ENCODE measurements at regions of chr11 and their contacts with region 1.

Region 1: DNA sequence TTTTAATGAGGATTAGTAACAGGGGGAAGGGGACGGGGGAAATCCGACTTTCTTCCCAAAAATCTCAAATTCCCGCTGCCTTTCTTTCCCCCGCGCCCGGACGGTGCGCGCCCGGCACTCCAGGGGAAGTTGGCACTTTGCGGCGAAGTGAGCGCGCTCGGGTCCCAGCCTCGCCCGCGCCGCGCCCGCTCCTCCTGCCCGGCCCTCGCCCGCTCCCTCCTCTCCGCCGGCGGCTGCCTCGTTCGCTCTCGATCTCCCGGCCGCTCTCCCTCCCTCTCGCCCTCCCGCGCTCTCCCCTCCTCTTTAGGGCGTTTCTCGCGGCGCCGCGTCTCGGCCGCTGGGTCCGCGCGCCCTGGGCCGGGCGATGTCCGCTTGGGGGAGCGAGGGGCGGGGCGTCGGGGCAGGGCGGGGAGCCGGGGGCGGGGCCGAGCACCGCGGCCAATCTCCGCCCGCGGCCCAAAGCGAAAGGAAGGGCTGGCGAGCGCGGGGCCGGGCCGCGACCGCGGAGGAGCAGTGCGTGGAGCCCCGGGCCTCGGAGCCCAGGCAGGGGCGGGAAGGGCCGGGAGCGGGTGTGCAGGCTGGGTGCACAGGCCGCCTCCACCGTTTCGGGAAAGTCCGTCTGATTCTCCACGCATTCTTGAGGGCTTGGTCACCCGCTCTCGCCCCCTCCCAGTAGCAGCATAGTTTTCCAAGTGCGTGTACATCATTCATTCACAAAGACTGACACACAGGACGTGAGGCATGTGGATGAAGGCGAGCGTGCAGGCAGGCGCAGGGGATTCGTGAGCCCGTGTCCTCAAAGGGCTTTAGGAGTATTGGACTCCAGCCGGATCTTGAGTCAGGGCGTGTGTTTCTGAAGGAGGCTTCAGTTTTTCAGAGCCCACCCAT is 65.1 kb downstream of the ETS1 start:
- DNase-seq: peak; percentile 94
- H3K4me3 Mint-ChIP-seq: peak overlapping the region; percentile 97
- H3K27ac Mint-ChIP-seq: peak overlapping the region; percentile 96
- H3K4me1 Mint-ChIP-seq: peaks cover 42% of the 10 kb centered on the region
- H3K27me3 Mint-ChIP-seq: no peaks in the 10 kb centered on the region

Region 2: DNA sequence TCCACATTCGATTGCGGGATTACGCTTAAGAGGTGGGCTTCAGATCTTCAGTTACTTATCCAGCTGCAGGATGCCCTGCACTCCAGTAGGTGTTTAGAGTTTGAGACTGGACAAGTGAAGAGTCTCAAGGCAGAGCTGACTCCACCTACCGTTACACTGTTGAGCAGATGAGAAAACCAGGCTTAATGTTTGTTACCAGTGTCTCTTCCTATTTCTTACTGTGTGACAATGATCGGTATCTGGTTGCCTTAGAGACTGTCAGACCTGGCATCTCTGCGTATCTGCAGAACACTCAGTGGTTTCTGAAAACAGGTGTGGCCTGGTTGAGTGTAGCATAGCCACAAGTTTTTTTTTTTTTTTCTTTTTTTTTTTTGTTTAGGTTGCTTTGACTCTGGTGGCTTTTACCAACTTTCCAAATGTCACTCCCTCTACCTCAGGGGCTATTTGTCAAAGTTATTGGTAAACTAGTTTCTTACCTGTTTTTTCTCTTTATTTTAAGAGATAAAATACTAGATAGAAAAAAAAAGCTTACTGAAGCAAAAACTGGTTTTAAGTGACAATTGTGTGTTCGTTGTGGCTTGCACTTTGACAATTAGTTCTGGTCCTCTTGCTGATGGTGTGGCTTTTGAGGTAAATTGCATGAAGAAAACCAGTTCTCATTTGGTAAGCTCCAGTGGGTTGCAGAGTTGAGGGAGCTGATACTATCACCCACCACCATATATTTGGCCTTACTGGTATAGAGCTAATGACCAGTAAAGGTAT is 219.7 kb before region 1 on chr11:
- CTCF ChIA-PET with region 1: no interaction called
- POLR2A ChIA-PET with region 1: interaction called, 33 read pairs
- intact Hi-C with region 1: no loop called
- DNase-seq: peak; percentile 81
- H3K4me3 Mint-ChIP-seq: peak overlapping the region; percentile 79
- H3K27ac Mint-ChIP-seq: peak overlapping the region; percentile 94
- H3K4me1 Mint-ChIP-seq: peaks cover 78% of the 10 kb centered on the region
- H3K27me3 Mint-ChIP-seq: no peaks in the 10 kb centered on the region

Region 3: GRCh38 chr11:128422576-128423370 is 99.5 kb before region 1 on chr11:
- CTCF ChIA-PET with region 1: no interaction called
- POLR2A ChIA-PET with region 1: interaction called, 4 read pairs
- intact Hi-C with region 1: loop called (anchors 1 kb)
- DNase-seq: peak; percentile 95
- H3K4me3 Mint-ChIP-seq: peak overlapping the region; percentile 49
- H3K27ac Mint-ChIP-seq: peak overlapping the region; percentile 65
- H3K4me1 Mint-ChIP-seq: peaks cover 34% of the 10 kb centered on the region
- H3K27me3 Mint-ChIP-seq: no peaks in the 10 kb centered on the region

Region 4: GRCh38 chr11:128497061-128497775 is 25.1 kb before region 1 on chr11:
- CTCF ChIA-PET with region 1: interaction called, 12 read pairs
- POLR2A ChIA-PET with region 1: interaction called, 600 read pairs
- intact Hi-C with region 1: loop called (anchors 1 kb)
- DNase-seq: peak; percentile 67
- H3K4me3 Mint-ChIP-seq: peak overlapping the region; percentile 71
- H3K27ac Mint-ChIP-seq: peak overlapping the region; percentile 91
- H3K4me1 Mint-ChIP-seq: peaks cover 95% of the 10 kb centered on the region
- H3K27me3 Mint-ChIP-seq: no peaks in the 10 kb centered on the region

Region 5: DNA sequence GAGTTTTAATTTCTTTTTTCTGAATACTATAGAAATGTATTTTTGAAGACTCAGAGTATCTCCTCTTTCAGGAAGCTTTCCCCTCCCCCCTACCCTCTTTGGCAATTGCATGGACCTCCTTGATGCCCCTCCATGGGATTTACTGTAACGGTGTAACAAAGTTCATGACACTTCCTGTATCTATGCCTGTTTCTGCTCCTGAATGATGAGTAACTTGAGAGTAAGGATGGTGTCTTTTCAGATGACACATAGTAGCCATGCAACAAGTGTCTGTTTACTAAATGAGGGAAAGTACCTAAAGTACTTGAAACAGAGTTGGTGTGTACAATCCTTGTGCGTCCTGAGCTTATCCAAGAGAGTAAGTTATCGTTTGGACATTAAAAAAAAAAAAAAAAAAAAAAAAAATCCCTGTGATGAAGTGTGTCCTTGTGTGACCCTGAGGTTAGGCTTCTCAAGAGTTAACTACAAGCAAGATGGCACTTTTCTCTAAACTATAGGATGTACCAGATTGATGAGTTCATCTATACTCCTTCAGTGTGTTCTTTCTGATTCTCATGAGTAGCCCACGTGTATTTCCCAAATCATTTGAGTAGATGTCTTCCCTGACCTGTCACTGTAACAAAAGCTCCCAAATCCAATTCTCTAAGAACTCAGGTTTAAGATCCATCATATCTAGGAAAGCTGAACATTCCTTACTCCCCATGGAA is 57.7 kb after region 1 on chr11:
- CTCF ChIA-PET with region 1: interaction called, 9 read pairs
- POLR2A ChIA-PET with region 1: interaction called, 17 read pairs
- intact Hi-C with region 1: loop called (anchors 1 kb)
- DNase-seq: peak; percentile 27
- H3K4me3 Mint-ChIP-seq: peak overlapping the region; percentile 71
- H3K27ac Mint-ChIP-seq: peak overlapping the region; percentile 95
- H3K4me1 Mint-ChIP-seq: peaks cover 68% of the 10 kb centered on the region
- H3K27me3 Mint-ChIP-seq: no peaks in the 10 kb centered on the region

Region 6: GRCh38 chr11:128695539-128696221 is 173.4 kb after region 1 on chr11:
- CTCF ChIA-PET with region 1: interaction called, 4 read pairs
- POLR2A ChIA-PET with region 1: interaction called, 4 read pairs
- intact Hi-C with region 1: loop called (anchors 2 kb)
- DNase-seq: peak; percentile 55
- H3K4me3 Mint-ChIP-seq: peak overlapping the region; percentile 78
- H3K27ac Mint-ChIP-seq: peak overlapping the region; percentile 89
- H3K4me1 Mint-ChIP-seq: peaks cover 57% of the 10 kb centered on the region
- H3K27me3 Mint-ChIP-seq: peaks cover 5% of the 10 kb centered on the region